ENCODE measurements at regions of chr20 and their contacts with region 1.

Region 1: DNA sequence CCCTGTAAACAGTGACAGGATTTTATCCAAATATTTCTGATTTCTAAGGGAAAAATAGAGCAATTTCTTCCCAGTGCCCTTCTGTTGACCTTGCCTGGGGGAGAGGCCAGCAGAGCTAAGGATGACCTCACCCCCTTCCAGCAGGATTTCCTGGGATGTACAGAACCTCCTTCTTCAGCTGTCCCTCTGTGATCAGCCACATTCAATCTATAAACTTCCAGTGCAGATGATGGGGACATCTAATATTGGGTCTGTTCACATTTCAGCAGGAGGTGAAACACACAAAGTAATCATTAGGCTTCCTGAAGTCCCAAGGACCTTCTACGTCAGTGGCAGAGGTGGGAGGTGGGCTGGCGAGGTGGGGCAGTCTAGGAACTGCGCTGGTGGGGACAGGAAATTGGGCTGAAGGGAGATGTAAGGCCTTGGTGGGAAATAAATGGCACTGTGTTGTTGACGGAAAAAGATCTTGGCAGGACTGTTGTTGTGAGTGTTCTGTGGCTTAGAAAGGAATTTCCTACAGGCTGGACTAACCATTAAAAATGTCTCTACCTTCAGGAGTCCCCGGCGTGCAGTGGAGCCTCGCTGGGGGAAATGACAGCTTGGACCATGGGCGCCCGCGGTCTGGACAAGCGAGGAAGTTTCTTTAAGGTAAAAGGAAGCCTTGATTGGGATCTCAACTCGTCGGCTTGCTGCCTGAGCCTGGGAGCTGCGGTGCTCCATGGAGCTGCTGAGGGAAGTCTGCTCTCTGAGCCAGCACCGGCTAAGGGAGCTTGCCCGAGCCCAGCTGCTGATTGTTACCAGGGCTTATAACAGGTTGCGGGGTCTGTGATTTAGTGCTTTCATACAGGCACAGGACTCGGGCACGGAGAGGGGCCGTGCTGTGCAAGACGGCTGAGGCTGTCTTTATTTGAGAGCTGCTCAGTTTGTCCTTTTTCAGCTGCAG is 127.9 kb upstream of the NAA20 start:
- DNase-seq: peak; percentile 56
- H3K4me3 ChIP-seq: peak overlapping the region; percentile 66
- H3K27ac ChIP-seq: peak overlapping the region; percentile 92
- H3K4me1 ChIP-seq: peaks cover 99% of the 10 kb centered on the region
- H3K27me3 ChIP-seq: no peaks in the 10 kb centered on the region
- CTCF ChIP-seq: no peak

Region 2: DNA sequence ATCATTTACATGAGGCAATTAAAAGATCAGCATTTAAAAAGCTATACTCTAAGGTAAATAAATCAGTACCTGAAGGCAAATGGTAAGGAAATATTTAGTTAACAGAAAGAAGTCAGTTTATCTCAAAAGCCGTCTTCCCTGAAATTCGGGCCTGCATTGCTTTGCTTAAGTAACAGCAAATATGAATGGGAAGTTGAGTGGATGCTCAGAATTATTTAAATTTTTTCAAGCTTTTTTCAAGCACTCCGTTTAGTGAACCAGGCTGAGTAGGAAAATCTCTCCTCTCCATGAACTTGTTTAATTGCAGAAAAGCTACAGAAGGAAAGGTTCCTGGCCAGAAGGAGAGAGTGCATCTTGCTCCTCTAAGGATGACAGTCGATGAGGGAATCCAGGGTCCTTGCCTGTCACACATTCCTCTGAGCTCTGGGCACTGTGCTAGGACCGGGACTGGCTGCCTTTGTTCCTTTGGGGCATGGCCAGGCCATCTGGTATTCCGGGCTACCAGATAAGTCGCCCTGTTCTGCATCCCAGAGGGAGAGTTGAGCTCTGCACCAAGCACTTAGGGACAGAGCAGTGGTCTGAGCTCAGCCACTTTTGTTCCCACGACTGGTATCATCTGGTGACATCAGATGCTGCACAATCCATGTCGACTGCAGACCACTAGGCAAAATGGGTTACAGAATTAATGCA is 53.6 kb before region 1 on chr20:
- intact Hi-C with region 1: loop called (anchors 10 kb)
- DNase-seq: peak; percentile 61
- H3K4me3 ChIP-seq: no peak overlapping the region
- H3K27ac ChIP-seq: peak overlapping the region; percentile 56
- H3K4me1 ChIP-seq: peaks cover 25% of the 10 kb centered on the region
- H3K27me3 ChIP-seq: no peaks in the 10 kb centered on the region
- CTCF ChIP-seq: peak; percentile 21

Region 3: DNA sequence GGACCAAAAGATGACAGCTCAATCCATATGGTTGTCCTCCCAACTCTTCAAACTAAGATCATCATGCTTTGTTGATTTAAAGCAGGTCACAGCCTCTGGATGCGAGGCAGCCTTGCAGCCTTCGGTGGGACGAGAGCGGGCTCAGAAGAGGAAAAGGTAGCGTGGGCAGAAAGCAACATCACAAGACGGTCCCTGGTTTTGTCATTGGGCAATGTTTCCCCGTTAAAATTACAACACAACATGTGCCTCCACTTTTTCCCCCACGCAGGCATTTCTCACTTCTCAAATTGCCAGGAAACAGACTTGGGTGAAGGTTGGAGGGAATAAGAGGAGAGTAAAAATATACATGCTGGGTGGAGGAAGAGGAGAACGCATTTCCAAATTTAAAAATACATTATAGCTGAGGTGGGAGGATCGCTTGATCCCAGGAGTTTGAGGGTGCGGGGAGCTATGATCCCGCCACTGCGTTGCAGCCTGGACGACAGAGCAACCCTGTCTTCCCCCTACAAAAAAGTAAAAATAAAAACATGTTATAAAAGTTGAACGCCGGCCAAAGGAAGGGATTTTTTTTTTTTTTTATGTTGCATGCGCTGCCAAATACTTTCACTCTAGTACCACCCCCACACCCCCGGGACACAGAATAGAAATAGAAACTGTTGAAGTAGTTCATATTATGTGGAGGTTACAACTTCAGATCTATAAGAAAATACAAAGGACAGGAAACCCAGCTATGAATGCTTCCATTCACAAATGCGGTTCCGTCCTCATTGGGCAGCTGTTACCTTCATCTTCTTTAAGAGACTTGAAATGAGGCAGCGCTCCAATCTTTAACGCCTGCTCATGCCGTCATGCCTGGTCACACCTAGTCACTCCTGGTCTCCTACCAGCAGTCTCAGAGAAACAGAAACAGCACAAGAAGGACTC is 114.0 kb after region 1 on chr20:
- intact Hi-C with region 1: no loop called
- DNase-seq: no peak
- H3K4me3 ChIP-seq: peak overlapping the region; percentile 49
- H3K27ac ChIP-seq: peak overlapping the region; percentile 86
- H3K4me1 ChIP-seq: peaks cover 60% of the 10 kb centered on the region
- H3K27me3 ChIP-seq: no peaks in the 10 kb centered on the region
- CTCF ChIP-seq: no peak

Region 4: DNA sequence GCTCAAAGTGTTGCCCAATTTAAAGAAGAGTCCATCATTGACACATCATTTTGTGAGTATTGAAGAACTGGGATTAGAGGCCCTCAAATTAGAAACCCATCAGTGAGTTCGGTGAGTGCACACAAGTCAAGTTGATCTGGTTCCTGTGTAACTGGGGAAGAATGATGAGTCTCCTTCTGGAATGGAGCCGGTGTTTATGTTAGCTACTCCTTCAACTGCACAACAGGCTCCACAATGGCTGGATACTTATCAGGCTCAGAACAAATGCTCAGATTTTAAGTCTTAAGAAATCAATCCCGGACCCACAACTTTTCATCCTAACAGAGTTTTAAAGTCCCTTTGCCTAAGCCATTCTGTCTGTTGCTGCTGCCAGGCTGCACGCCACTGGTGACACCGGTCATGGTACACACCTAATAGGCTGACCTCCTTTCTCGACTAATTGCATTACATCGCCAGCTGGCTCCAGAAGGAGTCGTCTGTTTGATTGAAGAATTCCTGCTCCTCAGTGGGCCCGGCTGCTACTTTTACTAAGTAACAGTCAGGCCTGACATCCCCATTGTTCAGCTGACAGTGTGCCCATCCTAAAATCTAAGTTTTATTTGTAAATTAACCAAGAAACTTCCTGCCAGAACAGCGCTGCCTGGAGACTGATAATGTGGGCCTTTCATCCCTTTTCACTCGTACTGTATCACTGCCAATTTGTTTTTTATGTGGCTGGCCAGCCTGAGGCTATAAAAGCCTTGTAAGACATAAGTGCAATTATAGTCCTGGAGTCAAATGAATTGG is 609.0 kb after region 1 on chr20:
- intact Hi-C with region 1: no loop called
- DNase-seq: no peak
- H3K4me3 ChIP-seq: no peak overlapping the region
- H3K27ac ChIP-seq: no peak overlapping the region
- H3K4me1 ChIP-seq: no peaks in the 10 kb centered on the region
- H3K27me3 ChIP-seq: no peaks in the 10 kb centered on the region
- CTCF ChIP-seq: no peak

Measured in left ventricle myocardium inferior (tissue), 1 donor.